Activated B cell treated with CpG ODN at 0.5 μM for 24 hours (primary cell): ENCODE measurements at regions of chrX and their contacts with region 1.

Region 1: DNA sequence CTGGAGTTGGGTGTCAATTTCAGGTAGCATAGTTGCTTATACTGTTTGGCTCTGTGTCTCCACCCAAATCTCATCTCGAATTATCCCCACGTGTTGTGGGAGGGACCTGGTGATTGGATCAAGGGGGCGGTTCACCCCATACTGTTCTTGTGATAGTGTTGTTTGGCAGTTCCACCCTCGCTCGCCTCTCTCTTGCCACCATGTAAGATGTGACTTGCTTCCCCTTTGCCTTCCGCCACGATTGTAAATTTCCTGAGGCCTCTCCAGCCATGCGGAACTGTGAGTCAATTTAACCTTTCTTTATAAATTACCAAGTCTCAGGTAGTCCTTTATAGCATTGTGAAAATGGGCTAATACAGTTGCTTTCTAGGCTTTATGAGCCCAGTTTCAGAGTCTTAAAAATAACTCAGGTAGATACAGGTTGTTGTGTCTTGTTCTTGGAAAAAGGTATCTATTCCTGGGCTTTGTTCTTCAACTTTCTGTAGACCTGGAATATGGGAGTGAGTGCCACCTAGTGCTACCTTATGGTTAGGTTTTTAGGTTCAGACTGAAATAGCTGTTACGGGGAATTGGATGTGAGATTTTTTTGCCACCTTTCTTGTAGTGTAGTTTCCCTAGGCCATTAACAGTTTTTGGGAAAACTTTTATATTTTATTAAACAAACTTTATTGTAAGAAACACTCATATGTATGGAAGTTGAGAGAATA is 15.6 kb downstream of the PGK1 start:
- DNase-seq: no peak
- ATAC-seq: no peak
- H3K4me3 Mint-ChIP-seq: no peak overlapping the region
- H3K27ac Mint-ChIP-seq: peak overlapping the region; percentile 32
- H3K4me1 Mint-ChIP-seq: peaks cover 19% of the 10 kb centered on the region
- H3K27me3 Mint-ChIP-seq: no peaks in the 10 kb centered on the region
- CTCF ChIP-seq: no peak

Region 2: DNA sequence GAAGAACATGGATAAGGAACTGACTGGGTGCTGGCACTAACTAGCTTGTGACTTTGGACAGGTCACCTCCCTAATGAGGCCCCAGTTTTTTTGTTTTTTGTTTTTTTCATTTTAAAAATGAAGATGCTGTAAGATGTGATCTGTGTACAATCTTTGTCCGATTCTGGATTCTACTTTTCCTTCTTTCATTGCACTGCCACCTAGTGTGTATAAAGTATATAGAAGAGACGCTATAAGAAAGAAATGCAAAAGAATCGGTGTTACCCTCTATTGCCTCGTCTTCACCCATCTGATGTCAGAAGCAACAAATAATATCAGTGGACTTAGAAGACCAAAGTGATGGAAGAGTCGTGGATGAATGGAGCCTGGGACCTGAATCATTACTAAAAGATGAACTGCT is 766.9 kb after region 1 on chrX:
- CTCF ChIA-PET with region 1: no interaction called
- POLR2A ChIA-PET with region 1: no interaction called
- intact Hi-C with region 1: loop called (anchors 5 kb)
- DNase-seq: no peak
- ATAC-seq: no peak
- H3K4me3 Mint-ChIP-seq: no peak overlapping the region
- H3K27ac Mint-ChIP-seq: no peak overlapping the region
- H3K4me1 Mint-ChIP-seq: peaks cover 6% of the 10 kb centered on the region
- H3K27me3 Mint-ChIP-seq: no peaks in the 10 kb centered on the region
- CTCF ChIP-seq: no peak